Activated naive CD4-positive, alpha-beta T cell treated with anti-CD3 and anti-CD28 coated beads for 36 hours (primary cell): ENCODE measurements at regions of chr12 and their contacts with region 1.

Region 1: DNA sequence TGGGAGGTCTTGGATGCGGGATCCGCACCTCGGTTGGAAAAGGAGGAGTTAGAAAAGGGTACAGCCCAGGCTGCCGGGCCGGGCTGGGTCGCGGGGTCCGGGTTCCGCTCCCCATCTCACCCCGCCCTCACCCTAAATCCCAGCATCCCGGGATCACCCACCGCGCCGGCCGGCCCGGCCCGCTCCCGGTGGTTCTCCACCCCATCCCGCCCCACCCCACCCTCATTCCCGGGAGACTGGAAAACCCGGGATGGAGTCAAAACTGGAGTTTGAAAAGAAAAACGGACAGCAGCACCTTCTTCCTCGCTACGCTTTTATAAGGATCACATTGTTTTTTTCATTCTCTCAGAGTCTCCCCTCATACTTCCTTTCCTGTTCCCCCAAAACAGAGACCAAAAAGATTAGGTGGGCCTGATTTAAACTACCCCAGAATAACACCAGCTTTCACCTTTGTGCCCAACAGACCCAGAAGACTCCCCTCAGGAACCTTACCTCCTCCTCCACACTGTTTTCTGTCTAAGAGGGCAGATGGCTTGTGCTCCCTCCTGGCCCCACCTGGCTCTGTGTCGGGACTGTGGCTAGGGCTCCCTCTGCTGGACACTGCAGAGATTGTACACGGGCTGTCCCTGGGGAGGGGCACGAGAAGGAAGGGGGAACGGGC is 2.8 kb downstream of the GLI1 start:
- DNase-seq: peak; percentile 95
- H3K4me3 Mint-ChIP-seq: peak overlapping the region; percentile 79
- H3K27ac Mint-ChIP-seq: peak overlapping the region; percentile 19
- H3K4me1 Mint-ChIP-seq: peaks cover 47% of the 10 kb centered on the region
- H3K27me3 Mint-ChIP-seq: peaks cover 9% of the 10 kb centered on the region

Region 2: DNA sequence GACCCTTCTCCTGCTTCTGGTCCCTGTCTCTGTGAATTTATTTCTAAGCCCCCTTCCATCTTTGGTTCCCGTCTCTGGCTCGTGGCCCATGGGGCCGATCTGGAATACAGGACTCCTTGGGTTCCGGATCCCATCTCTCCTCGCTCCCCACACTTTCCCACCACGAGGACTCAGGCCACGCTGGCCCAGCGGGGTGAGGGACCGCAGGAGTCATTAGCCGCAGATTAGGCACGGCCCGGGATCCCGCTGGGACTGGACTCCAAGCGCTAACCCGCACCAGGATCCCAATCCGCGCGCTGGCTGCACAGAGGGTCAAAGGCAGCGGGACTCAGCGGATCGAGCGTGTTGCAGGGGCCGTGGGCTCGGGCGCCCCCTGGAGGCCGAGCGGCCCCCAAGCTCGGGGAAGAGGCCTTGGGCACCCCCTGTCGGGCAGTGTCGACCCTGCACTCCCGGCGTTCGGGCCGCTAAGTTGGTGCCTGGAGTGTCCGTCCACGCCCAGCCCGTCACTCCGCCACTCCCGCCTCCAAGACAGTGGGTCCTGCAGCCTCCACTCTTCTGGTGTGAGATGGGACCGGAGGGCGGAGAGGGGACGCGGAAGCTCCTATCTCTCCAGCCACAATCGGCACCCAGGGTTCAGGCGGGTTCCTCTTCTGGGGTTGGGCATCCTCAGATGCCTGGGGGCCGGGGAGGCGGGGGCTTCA is 223.4 kb before region 1 on chr12:
- CTCF ChIA-PET with region 1: interaction called, 10 read pairs
- intact Hi-C with region 1: loop called (anchors 1 kb)
- DNase-seq: peak; percentile 91
- H3K4me3 Mint-ChIP-seq: peak overlapping the region; percentile 93
- H3K27ac Mint-ChIP-seq: peak overlapping the region; percentile 66
- H3K4me1 Mint-ChIP-seq: peaks cover 66% of the 10 kb centered on the region
- H3K27me3 Mint-ChIP-seq: peaks cover 50% of the 10 kb centered on the region

Region 3: DNA sequence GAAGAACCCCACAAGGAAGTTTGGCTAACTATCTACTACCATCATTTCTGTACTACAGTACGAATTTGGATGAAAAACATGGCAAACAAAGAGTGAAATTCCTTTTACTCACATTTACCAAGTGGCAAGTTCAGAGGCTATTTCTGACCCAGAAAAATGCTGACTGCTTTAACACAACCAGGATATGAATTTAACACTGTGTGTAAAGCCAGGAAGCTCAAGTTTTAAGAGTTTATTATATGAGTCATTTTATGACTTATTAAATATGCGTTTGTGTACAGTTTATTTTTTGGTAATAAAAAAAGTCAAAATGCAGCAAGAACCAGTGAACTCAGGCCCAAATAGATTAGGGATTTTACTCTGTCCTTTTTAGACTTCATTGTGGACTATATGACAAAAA is 153.0 kb before region 1 on chr12:
- CTCF ChIA-PET with region 1: interaction called, 172 read pairs
- intact Hi-C with region 1: no loop called
- DNase-seq: no peak
- H3K4me3 Mint-ChIP-seq: no peak overlapping the region
- H3K27ac Mint-ChIP-seq: no peak overlapping the region
- H3K4me1 Mint-ChIP-seq: no peaks in the 10 kb centered on the region
- H3K27me3 Mint-ChIP-seq: no peaks in the 10 kb centered on the region

Region 4: GRCh38 chr12:57476162-57476992 is 14.0 kb after region 1 on chr12:
- CTCF ChIA-PET with region 1: interaction called, 207 read pairs
- intact Hi-C with region 1: loop called (anchors 1 kb)
- DNase-seq: peak; percentile 94
- H3K4me3 Mint-ChIP-seq: peak overlapping the region; percentile 84
- H3K27ac Mint-ChIP-seq: peak overlapping the region; percentile 99
- H3K4me1 Mint-ChIP-seq: peaks cover 65% of the 10 kb centered on the region
- H3K27me3 Mint-ChIP-seq: no peaks in the 10 kb centered on the region

Region 5: GRCh38 chr12:57621497-57622292 is 159.3 kb after region 1 on chr12:
- CTCF ChIA-PET with region 1: interaction called, 4 read pairs
- intact Hi-C with region 1: loop called (anchors 1 kb)
- DNase-seq: peak; percentile 65
- H3K4me3 Mint-ChIP-seq: peak overlapping the region; percentile 71
- H3K27ac Mint-ChIP-seq: no peak overlapping the region
- H3K4me1 Mint-ChIP-seq: peaks cover 27% of the 10 kb centered on the region
- H3K27me3 Mint-ChIP-seq: peaks cover 86% of the 10 kb centered on the region

Region 6: DNA sequence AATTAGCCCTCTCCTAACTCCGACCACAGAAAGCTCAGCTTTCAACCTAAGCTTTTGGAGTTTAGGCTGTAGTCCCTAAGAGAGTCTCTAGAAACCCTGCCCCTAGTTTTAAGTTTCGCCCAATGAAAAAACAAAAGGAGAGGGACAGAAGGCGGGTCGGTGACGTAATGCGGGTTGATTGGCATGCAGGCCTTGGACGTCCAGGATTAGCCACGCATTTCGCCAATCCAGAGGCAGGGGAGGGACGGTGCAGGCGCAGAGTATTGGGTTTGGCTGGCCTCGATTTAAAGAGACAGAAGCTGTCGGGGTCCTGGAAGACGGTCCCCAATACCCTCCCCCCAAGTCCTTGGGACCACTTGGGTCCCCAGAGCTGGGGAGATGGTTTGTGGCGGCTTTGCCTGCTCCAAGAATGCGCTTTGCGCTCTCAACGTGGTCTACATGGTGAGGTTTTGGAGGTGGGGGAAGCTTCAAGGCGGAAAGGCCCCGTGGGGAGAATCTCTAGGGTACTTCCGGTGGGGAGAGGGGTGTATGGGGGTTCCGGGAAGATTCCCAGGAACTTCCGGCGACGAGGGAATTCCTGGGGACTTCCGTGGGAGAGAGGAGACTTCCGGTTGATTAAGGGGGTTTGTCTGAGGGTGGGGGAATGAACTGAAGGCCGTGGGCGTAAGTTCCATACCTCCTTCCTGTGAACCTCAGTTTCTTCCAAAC is 282.6 kb after region 1 on chr12 and contains the start of gene TSPAN31:
- CTCF ChIA-PET with region 1: interaction called, 4 read pairs
- intact Hi-C with region 1: loop called (anchors 1 kb)
- DNase-seq: peak; percentile 99
- H3K4me3 Mint-ChIP-seq: peak within 1 kb of the TSS; percentile 85
- H3K27ac Mint-ChIP-seq: peak within 1 kb of the TSS; percentile 94
- H3K4me1 Mint-ChIP-seq: peaks cover 40% of the 10 kb centered on the region
- H3K27me3 Mint-ChIP-seq: no peaks in the 10 kb centered on the region
- total RNA-seq, gene TSPAN31: 6.4 to 7.7 TPM